B cell (primary cell): ENCODE measurements at regions of chr15 and their contacts with region 1.

Region 1: DNA sequence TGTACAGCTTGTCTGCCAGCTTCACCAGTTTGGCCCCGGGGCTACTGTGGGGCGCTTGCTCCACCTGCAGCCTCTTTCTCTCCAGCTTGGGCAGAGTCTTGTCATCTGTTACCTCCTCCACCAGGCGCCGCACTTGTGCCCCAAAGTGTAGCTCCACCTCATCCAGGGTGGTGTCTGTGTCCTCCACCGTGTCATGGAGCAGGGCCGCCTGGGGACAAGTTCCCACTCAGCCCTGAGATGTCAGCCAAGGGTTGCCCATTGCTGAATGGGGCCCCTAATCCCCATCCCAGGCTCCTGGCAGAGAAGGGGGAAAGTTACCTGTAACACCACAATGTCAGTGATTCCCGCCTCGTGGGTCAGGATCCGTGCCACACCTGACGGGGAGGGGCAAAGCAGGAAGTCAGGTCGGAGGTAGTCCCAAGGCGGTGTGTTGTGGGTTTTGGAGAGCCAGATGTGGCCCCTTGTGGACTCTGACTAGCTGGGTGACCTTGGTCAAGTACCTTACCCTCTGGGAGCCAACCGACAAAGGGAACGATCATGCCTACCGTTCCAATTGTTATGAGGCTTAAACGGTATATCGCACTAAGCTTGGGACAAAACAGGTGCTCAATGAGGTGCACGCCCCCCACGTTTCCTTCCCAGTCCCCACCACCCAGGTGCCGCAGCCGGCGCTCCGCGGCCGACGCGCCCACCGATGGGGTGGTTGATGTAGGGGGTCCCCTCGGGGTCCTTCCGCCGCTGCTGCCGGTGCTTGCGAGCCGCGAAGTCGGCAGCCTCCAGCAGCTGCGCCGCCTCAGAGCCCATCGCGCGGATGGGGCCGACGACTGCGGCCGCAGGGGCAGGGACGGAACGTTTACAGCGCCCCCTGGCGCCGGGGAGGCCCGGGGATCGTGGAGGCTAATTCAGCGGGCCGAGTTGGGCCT is at the start of gene HDDC3:
- DNase-seq: peak; percentile 92
- ATAC-seq: peak; percentile 52
- H3K4me3 ChIP-seq: peak within 1 kb of the TSS; percentile 72 to 97 (median 86)
- H3K4me3 Mint-ChIP-seq: peak within 1 kb of the TSS; percentile 98
- H3K27ac ChIP-seq: peak within 1 kb of the TSS; percentile 93 to 94
- H3K27ac Mint-ChIP-seq: peak within 1 kb of the TSS; percentile 99
- H3K4me1 ChIP-seq: peaks cover 42 to 64% of the 10 kb centered on the region in 2 donors
- H3K4me1 Mint-ChIP-seq: peaks cover 52% of the 10 kb centered on the region
- H3K27me3 ChIP-seq: no peaks in the 10 kb centered on the region
- H3K27me3 Mint-ChIP-seq: no peaks in the 10 kb centered on the region
- CTCF ChIP-seq: peak; percentile 91
- total RNA-seq, gene HDDC3: 23.4 and 23.9 TPM in 2 replicates

Region 2: GRCh38 chr15:89893696-89894455 is 1038.1 kb before region 1 on chr15 and contains the start of gene AP3S2:
- CTCF ChIA-PET with region 1: no interaction called
- POLR2A ChIA-PET with region 1: no interaction called
- intact Hi-C with region 1: loop called (anchors 5 kb)
- DNase-seq: peak; percentile 93
- ATAC-seq: peak; percentile 91
- H3K4me3 ChIP-seq: peak within 1 kb of the TSS; percentile 75 to 95 (median 89)
- H3K4me3 Mint-ChIP-seq: peak within 1 kb of the TSS; percentile 98
- H3K27ac ChIP-seq: peak within 1 kb of the TSS; percentile 62 to 80
- H3K27ac Mint-ChIP-seq: peak within 1 kb of the TSS; percentile 95
- H3K4me1 ChIP-seq: peaks cover 7 to 14% of the 10 kb centered on the region in 2 donors
- H3K4me1 Mint-ChIP-seq: peaks cover 33% of the 10 kb centered on the region
- H3K27me3 ChIP-seq: no peaks in the 10 kb centered on the region
- H3K27me3 Mint-ChIP-seq: no peaks in the 10 kb centered on the region
- CTCF ChIP-seq: no peak
- total RNA-seq, gene AP3S2: 32.3 and 43.1 TPM in 2 replicates

Region 3: DNA sequence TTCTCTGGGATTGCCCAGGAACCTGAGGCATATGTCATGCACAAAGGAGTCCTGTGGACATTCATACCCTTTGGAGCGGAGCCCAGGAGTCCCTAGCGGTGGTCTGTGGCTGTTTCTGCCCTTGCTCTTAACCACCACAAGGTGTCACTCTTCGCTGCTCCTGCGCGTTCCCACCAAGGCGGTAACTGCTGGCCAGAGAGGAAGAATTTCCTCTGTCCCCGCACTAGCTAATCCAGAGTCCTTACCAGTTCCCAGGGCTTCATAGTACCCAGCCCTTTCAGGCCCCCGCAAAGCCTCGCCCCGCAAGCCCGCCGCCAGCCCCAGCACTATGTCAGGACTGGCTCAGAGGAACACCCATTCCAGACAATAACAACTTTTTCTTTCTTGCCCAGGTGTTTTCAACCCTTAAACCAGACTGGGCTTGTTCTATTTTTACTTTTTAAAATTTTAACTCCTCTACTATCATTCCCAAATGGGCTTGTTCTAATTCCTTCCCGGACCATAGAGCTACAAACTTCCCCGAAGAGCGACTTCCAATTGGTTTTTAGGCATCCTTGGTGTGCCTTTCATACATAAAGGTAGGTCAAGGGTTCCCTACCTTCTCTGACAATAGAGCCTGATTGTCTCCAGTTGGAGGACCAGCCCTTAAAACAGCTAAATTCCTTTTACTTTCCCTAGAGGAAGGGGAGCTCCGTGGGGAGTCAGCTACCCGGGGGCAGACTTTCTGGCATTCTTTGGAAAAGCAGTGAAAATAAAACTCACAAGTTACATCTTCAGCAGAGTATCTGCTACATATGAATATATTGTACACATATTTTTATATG is 611.7 kb before region 1 on chr15:
- CTCF ChIA-PET with region 1: interaction called, 16 read pairs
- POLR2A ChIA-PET with region 1: no interaction called
- intact Hi-C with region 1: no loop called
- DNase-seq: peak; percentile 84
- ATAC-seq: peak; percentile 98
- H3K4me3 ChIP-seq: peak overlapping the region in 1 of 5 experiments; percentile 9
- H3K4me3 Mint-ChIP-seq: peak overlapping the region; percentile 2
- H3K27ac ChIP-seq: no peak overlapping the region
- H3K27ac Mint-ChIP-seq: no peak overlapping the region
- H3K4me1 ChIP-seq: peaks cover 3 to 7% of the 10 kb centered on the region in 2 donors
- H3K4me1 Mint-ChIP-seq: peaks cover 5% of the 10 kb centered on the region
- H3K27me3 ChIP-seq: no peaks in the 10 kb centered on the region
- H3K27me3 Mint-ChIP-seq: no peaks in the 10 kb centered on the region
- CTCF ChIP-seq: peak; percentile 95

Region 4: GRCh38 chr15:90660195-90660998 is 271.6 kb before region 1 on chr15:
- CTCF ChIA-PET with region 1: interaction called, 17 read pairs
- POLR2A ChIA-PET with region 1: no interaction called
- intact Hi-C with region 1: no loop called
- DNase-seq: peak; percentile 58
- ATAC-seq: peak; percentile 82
- H3K4me3 ChIP-seq: peak overlapping the region; percentile 7 to 55 (median 30)
- H3K4me3 Mint-ChIP-seq: peak overlapping the region; percentile 66
- H3K27ac ChIP-seq: no peak overlapping the region
- H3K27ac Mint-ChIP-seq: peak overlapping the region; percentile 43
- H3K4me1 ChIP-seq: peaks cover 80 to 88% of the 10 kb centered on the region in 2 donors
- H3K4me1 Mint-ChIP-seq: peaks cover 76% of the 10 kb centered on the region
- H3K27me3 ChIP-seq: peaks cover 0 to 49% (median 29%) of the 10 kb centered on the region in 4 experiments
- H3K27me3 Mint-ChIP-seq: peaks cover 39% of the 10 kb centered on the region
- CTCF ChIP-seq: no peak

Region 5: DNA sequence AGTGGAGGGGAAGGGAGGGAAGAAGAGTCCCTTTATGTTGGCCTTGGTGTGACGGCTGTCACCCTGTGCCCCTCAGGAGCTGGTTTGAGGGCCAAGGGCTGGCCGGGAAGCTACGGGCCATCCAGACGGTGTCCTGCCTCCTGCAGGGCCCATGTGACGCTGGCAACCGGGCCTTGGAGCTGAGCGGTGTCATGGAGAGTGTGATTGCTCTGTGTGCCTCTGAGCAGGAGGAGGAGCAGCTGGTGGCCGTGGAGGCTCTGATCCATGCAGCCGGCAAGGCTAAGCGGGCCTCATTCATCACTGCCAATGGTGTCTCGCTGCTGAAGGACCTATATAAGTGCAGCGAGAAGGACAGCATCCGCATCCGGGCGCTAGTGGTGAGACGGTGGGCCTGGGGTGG is 14.5 kb after region 1 on chr15:
- CTCF ChIA-PET with region 1: interaction called, 15 read pairs
- POLR2A ChIA-PET with region 1: interaction called, 10 read pairs
- intact Hi-C with region 1: no loop called
- DNase-seq: no peak
- ATAC-seq: no peak
- H3K4me3 ChIP-seq: no peak overlapping the region
- H3K4me3 Mint-ChIP-seq: no peak overlapping the region
- H3K27ac ChIP-seq: no peak overlapping the region
- H3K27ac Mint-ChIP-seq: no peak overlapping the region
- H3K4me1 ChIP-seq: no peaks in the 10 kb centered on the region
- H3K4me1 Mint-ChIP-seq: no peaks in the 10 kb centered on the region
- H3K27me3 ChIP-seq: no peaks in the 10 kb centered on the region
- H3K27me3 Mint-ChIP-seq: no peaks in the 10 kb centered on the region
- CTCF ChIP-seq: no peak

Region 6: DNA sequence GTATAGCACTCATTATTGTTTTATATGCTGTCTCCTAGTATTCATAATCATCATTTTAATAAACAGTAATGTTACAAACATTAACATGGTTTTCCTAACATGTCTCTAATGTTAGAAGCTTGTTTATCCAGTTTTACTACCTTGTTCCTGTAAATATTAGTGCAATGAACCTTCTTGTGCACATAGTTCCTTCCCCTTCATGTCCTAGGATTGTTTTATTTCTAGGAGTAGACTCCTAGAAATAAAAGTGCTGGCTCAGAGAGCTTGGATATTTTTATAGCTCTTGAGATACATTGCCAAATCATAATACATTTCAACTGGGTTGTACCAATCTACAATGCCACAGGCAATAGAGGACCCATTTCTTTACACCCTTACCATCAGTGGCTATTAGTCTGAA is 329.3 kb after region 1 on chr15:
- CTCF ChIA-PET with region 1: no interaction called
- POLR2A ChIA-PET with region 1: no interaction called
- intact Hi-C with region 1: no loop called
- DNase-seq: no peak
- ATAC-seq: no peak
- H3K4me3 ChIP-seq: no peak overlapping the region
- H3K4me3 Mint-ChIP-seq: no peak overlapping the region
- H3K27ac ChIP-seq: no peak overlapping the region
- H3K27ac Mint-ChIP-seq: no peak overlapping the region
- H3K4me1 ChIP-seq: no peaks in the 10 kb centered on the region
- H3K4me1 Mint-ChIP-seq: peaks cover 3% of the 10 kb centered on the region
- H3K27me3 ChIP-seq: peaks cover 0 to 21% (median 1%) of the 10 kb centered on the region in 4 experiments
- H3K27me3 Mint-ChIP-seq: peaks cover 32% of the 10 kb centered on the region
- CTCF ChIP-seq: no peak

Region 7: GRCh38 chr15:91271565-91272153 is 339.7 kb after region 1 on chr15:
- CTCF ChIA-PET with region 1: interaction called, 10 read pairs
- POLR2A ChIA-PET with region 1: no interaction called
- intact Hi-C with region 1: no loop called
- DNase-seq: peak; percentile 74
- ATAC-seq: peak; percentile 33
- H3K4me3 ChIP-seq: no peak overlapping the region
- H3K4me3 Mint-ChIP-seq: no peak overlapping the region
- H3K27ac ChIP-seq: no peak overlapping the region
- H3K27ac Mint-ChIP-seq: no peak overlapping the region
- H3K4me1 ChIP-seq: peaks cover 0 to 4% of the 10 kb centered on the region in 2 donors
- H3K4me1 Mint-ChIP-seq: peaks cover 4% of the 10 kb centered on the region
- H3K27me3 ChIP-seq: peaks cover 0 to 6% (median 3%) of the 10 kb centered on the region in 4 experiments
- H3K27me3 Mint-ChIP-seq: peaks cover 40% of the 10 kb centered on the region
- CTCF ChIP-seq: peak; percentile 87

Region 8: GRCh38 chr15:91407237-91407889 is 475.4 kb after region 1 on chr15:
- CTCF ChIA-PET with region 1: no interaction called
- POLR2A ChIA-PET with region 1: no interaction called
- intact Hi-C with region 1: no loop called
- DNase-seq: no peak
- ATAC-seq: no peak
- H3K4me3 ChIP-seq: no peak overlapping the region
- H3K4me3 Mint-ChIP-seq: no peak overlapping the region
- H3K27ac ChIP-seq: no peak overlapping the region
- H3K27ac Mint-ChIP-seq: no peak overlapping the region
- H3K4me1 ChIP-seq: no peaks in the 10 kb centered on the region
- H3K4me1 Mint-ChIP-seq: no peaks in the 10 kb centered on the region
- H3K27me3 ChIP-seq: no peaks in the 10 kb centered on the region
- H3K27me3 Mint-ChIP-seq: no peaks in the 10 kb centered on the region
- CTCF ChIP-seq: no peak